B cell (primary cell): ENCODE measurements at regions of chr14 and their contacts with region 1.

Region 1: DNA sequence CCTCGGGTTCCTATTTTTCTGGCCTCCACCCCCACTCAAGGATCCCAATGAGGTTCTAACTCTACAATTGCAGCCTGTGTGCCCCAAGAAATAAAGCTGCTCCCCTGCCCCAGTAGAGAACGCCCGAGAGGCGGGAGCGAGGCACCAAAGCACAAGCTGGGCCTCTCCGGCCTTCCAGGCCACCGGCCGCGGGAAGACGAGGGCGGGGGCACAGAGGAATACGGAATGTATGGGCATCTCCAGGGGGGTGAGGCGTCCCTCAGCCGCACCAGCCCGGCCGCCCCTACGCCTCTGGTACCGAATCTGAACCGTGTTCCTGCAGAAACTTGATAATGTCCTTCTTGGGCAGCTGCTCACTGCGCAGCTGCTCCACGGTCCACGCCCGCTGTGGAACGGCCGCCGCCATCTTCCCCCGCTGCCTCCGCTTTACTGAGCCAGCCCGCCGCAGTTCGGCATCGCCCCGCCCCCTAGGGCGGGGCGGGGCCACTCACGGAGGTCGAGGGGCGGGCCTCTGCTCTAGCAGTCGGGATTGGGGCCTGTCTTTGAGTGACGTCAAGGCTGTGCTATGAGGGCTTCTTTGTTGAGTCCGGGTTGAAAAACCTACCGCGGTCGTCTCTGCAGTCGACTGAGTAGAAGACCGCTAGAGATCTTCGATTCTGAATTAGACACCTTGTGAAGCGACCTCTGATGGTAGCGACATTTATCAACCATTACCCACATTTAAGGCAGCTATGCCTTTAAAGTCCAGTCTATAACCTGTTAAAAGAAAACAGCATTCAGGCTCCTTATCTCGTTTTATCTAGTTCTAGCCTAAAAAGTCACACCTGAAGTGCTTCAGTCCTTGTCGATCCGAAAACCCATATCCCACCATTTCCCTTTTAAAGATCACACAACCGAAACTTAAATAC is at the start of gene FKBP3:
- DNase-seq: peak; percentile 98
- ATAC-seq: peak; percentile 93
- H3K4me3 ChIP-seq: peak within 1 kb of the TSS; percentile 79 to 99 (median 90)
- H3K4me3 Mint-ChIP-seq: peak within 1 kb of the TSS; percentile 94
- H3K27ac ChIP-seq: peak within 1 kb of the TSS; percentile 85 to 91
- H3K27ac Mint-ChIP-seq: peak within 1 kb of the TSS; percentile 99
- H3K4me1 ChIP-seq: peaks cover 23 to 27% of the 10 kb centered on the region in 2 donors
- H3K4me1 Mint-ChIP-seq: peaks cover 41% of the 10 kb centered on the region
- H3K27me3 ChIP-seq: no peaks in the 10 kb centered on the region
- H3K27me3 Mint-ChIP-seq: no peaks in the 10 kb centered on the region
- CTCF ChIP-seq: no peak
- total RNA-seq, gene FKBP3: 49.1 and 58.7 TPM in 2 replicates

Region 2: GRCh38 chr14:44897045-44897844 is 237.1 kb before region 1 on chr14:
- CTCF ChIA-PET with region 1: no interaction called
- POLR2A ChIA-PET with region 1: no interaction called
- intact Hi-C with region 1: loop called (anchors 1 kb)
- DNase-seq: peak; percentile 97
- ATAC-seq: peak; percentile 96
- H3K4me3 ChIP-seq: peak overlapping the region; percentile 45 to 87 (median 80)
- H3K4me3 Mint-ChIP-seq: peak overlapping the region; percentile 96
- H3K27ac ChIP-seq: peak overlapping the region; percentile 87 to 96
- H3K27ac Mint-ChIP-seq: peak overlapping the region; percentile 98
- H3K4me1 ChIP-seq: peaks cover 10 to 11% of the 10 kb centered on the region in 2 donors
- H3K4me1 Mint-ChIP-seq: peaks cover 14% of the 10 kb centered on the region
- H3K27me3 ChIP-seq: no peaks in the 10 kb centered on the region
- H3K27me3 Mint-ChIP-seq: no peaks in the 10 kb centered on the region
- CTCF ChIP-seq: no peak

Region 3: GRCh38 chr14:44961604-44962333 is 172.5 kb before region 1 on chr14 and contains the starts of genes KLHL28 and TOGARAM1:
- CTCF ChIA-PET with region 1: interaction called, 7 read pairs
- POLR2A ChIA-PET with region 1: interaction called, 15 read pairs
- intact Hi-C with region 1: loop called (anchors 1 kb)
- DNase-seq: peak; percentile 99
- ATAC-seq: peak; percentile 90
- H3K4me3 ChIP-seq: peak within 1 kb of the TSS; percentile 81 to 96 (median 92)
- H3K4me3 Mint-ChIP-seq: no peak within 1 kb of the TSS
- H3K27ac ChIP-seq: peak within 1 kb of the TSS; percentile 84 to 93
- H3K27ac Mint-ChIP-seq: no peak within 1 kb of the TSS
- H3K4me1 ChIP-seq: peaks cover 37 to 47% of the 10 kb centered on the region in 2 donors
- H3K4me1 Mint-ChIP-seq: peaks cover 45% of the 10 kb centered on the region
- H3K27me3 ChIP-seq: no peaks in the 10 kb centered on the region
- H3K27me3 Mint-ChIP-seq: no peaks in the 10 kb centered on the region
- CTCF ChIP-seq: no peak
- total RNA-seq, gene KLHL28: 33.5 and 36.1 TPM in 2 replicates
- total RNA-seq, gene TOGARAM1: 23.9 and 25.6 TPM in 2 replicates

Region 4: DNA sequence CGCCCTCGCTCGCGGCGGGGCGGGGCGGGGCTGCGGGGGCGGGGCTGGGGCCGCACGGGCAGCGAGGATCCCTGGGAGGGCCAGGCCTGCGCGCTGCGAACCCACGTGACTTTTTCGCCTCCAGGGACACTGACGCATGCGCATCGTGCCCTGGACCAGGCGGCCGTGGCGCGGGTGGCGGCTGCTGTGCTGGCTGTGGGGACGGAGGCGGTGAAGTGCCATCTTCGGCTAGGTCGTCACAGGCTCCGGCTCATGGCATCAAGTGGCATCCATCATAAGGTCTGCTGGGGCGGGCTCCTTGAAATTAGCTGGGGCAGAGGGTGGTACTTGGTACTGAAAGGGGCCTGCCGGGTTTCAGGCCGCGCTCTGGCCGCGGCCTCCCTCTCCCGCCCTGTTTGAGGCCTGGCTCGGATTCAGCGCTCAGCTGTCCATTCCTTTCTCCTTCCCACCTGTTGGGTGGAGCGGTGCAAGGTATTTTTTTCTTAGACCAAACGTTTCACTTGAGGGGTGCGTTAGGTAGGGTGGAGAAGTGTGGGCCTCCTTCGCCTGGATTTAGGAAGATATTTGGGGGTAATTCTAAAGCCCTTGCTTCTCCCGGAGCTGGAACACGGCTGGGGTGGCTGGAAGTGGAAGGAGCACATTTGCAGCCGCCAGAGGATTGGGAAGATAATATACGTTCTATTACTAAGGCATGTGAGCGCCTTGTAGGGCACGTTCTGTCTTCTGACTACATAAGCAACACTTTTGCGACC is 50.2 kb before region 1 on chr14 and contains the start of gene PRPF39:
- CTCF ChIA-PET with region 1: interaction called, 3 read pairs
- POLR2A ChIA-PET with region 1: no interaction called
- intact Hi-C with region 1: loop called (anchors 1 kb)
- DNase-seq: peak; percentile 97
- ATAC-seq: peak; percentile 93
- H3K4me3 ChIP-seq: peak within 1 kb of the TSS; percentile 64 to 95 (median 91)
- H3K4me3 Mint-ChIP-seq: peak within 1 kb of the TSS; percentile 96
- H3K27ac ChIP-seq: peak within 1 kb of the TSS; percentile 74 to 96
- H3K27ac Mint-ChIP-seq: peak within 1 kb of the TSS; percentile 96
- H3K4me1 ChIP-seq: peaks cover 21 to 36% of the 10 kb centered on the region in 2 donors
- H3K4me1 Mint-ChIP-seq: peaks cover 49% of the 10 kb centered on the region
- H3K27me3 ChIP-seq: no peaks in the 10 kb centered on the region
- H3K27me3 Mint-ChIP-seq: no peaks in the 10 kb centered on the region
- CTCF ChIP-seq: no peak
- total RNA-seq, gene PRPF39: 67.5 and 72.7 TPM in 2 replicates

Region 5: GRCh38 chr14:45091696-45092095 is 42.6 kb before region 1 on chr14:
- CTCF ChIA-PET with region 1: no interaction called
- POLR2A ChIA-PET with region 1: no interaction called
- intact Hi-C with region 1: loop called (anchors 5 kb)
- DNase-seq: no peak
- ATAC-seq: no peak
- H3K4me3 ChIP-seq: no peak overlapping the region
- H3K4me3 Mint-ChIP-seq: no peak overlapping the region
- H3K27ac ChIP-seq: no peak overlapping the region
- H3K27ac Mint-ChIP-seq: no peak overlapping the region
- H3K4me1 ChIP-seq: peaks cover 9 to 17% of the 10 kb centered on the region in 2 donors
- H3K4me1 Mint-ChIP-seq: peaks cover 33% of the 10 kb centered on the region
- H3K27me3 ChIP-seq: no peaks in the 10 kb centered on the region
- H3K27me3 Mint-ChIP-seq: no peaks in the 10 kb centered on the region
- CTCF ChIP-seq: no peak

Region 6: GRCh38 chr14:45253068-45253753 is 118.9 kb after region 1 on chr14 and contains the start of gene MIS18BP1:
- CTCF ChIA-PET with region 1: interaction called, 8 read pairs
- POLR2A ChIA-PET with region 1: interaction called, 8 read pairs
- intact Hi-C with region 1: loop called (anchors 1 kb)
- DNase-seq: peak; percentile 97
- ATAC-seq: peak; percentile 86
- H3K4me3 ChIP-seq: peak within 1 kb of the TSS; percentile 85 to 97 (median 94)
- H3K4me3 Mint-ChIP-seq: peak within 1 kb of the TSS; percentile 90
- H3K27ac ChIP-seq: peak within 1 kb of the TSS; percentile 81 to 86
- H3K27ac Mint-ChIP-seq: peak within 1 kb of the TSS; percentile 97
- H3K4me1 ChIP-seq: peaks cover 29 to 30% of the 10 kb centered on the region in 2 donors
- H3K4me1 Mint-ChIP-seq: peaks cover 29% of the 10 kb centered on the region
- H3K27me3 ChIP-seq: no peaks in the 10 kb centered on the region
- H3K27me3 Mint-ChIP-seq: no peaks in the 10 kb centered on the region
- CTCF ChIP-seq: peak; percentile 78
- total RNA-seq, gene MIS18BP1: 85.5 and 92.5 TPM in 2 replicates

Region 7: DNA sequence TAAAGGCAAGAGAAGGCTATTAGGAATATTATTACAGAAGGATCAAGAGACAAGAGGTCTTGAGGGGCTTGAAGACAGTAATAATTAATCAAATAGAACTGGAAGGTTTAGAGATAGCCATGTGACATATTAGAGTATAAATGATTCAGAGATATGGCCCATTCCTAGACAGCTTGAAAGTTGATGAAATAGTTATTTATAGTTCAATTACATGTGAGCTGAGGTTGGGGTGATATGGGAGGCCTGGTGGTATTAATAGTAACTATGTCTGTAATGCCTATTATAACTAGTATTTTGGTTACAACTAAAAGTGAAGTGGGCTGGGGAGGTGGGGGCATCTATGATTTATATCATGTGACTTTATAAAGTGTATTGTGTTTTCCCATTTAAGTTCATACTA is 132.8 kb after region 1 on chr14:
- CTCF ChIA-PET with region 1: interaction called, 5 read pairs
- POLR2A ChIA-PET with region 1: no interaction called
- intact Hi-C with region 1: loop called (anchors 5 kb)
- DNase-seq: no peak
- ATAC-seq: no peak
- H3K4me3 ChIP-seq: no peak overlapping the region
- H3K4me3 Mint-ChIP-seq: no peak overlapping the region
- H3K27ac ChIP-seq: no peak overlapping the region
- H3K27ac Mint-ChIP-seq: no peak overlapping the region
- H3K4me1 ChIP-seq: no peaks in the 10 kb centered on the region
- H3K4me1 Mint-ChIP-seq: no peaks in the 10 kb centered on the region
- H3K27me3 ChIP-seq: no peaks in the 10 kb centered on the region
- H3K27me3 Mint-ChIP-seq: peaks cover 8% of the 10 kb centered on the region
- CTCF ChIP-seq: no peak